ENCODE measurements at regions of chr15 and their contacts with region 1.

Region 1: GRCh38 chr15:59725172-59725486 is 36.0 kb upstream of the BNIP2 start:
- DNase-seq: no peak
- H3K4me3 ChIP-seq: no peak overlapping the region
- H3K27ac ChIP-seq: no peak overlapping the region
- H3K4me1 ChIP-seq: no peaks in the 10 kb centered on the region
- CTCF ChIP-seq: 0 out of 2 replicates have a peak, but pooled peaks have one; percentile 4

Region 2: GRCh38 chr15:59699810-59700431 is 25.2 kb before region 1 on chr15:
- CTCF ChIA-PET with region 1: no interaction called
- POLR2A ChIA-PET with region 1: no interaction called
- intact Hi-C with region 1: no loop called
- DNase-seq: no peak
- H3K4me3 ChIP-seq: no peak overlapping the region
- H3K27ac ChIP-seq: no peak overlapping the region
- H3K4me1 ChIP-seq: no peaks in the 10 kb centered on the region
- CTCF ChIP-seq: no peak

Region 3: DNA sequence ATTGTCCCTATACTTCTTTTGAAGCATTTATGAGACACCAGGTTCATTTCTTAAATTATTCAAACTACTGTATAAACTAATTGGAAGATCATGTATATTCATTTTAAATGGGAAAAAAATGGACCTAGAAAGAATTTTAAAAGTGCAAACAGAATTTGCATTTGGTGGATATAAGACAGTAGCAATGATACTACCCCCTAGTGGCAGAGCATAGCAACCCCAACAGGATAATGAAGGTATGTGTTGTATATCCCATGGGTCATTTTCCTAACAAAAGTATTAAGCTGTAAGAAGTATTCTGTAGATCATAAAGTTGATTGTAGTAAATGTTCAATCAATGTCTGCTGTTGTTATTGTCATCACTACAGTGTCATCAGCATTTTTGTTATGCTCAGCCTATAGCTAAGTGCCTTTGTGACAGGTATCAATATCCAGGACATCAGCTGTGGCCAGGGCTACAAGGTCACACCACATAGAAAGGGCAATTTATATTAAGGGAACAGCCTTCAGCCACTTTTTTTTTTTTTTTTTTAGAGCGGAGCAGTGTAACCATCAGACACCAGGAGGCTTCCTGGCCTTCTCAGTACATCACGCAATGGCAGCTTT is 454.8 kb after region 1 on chr15:
- CTCF ChIA-PET with region 1: no interaction called
- POLR2A ChIA-PET with region 1: no interaction called
- intact Hi-C with region 1: loop called (anchors 10 kb)
- DNase-seq: peak; percentile 51
- H3K4me3 ChIP-seq: no peak overlapping the region
- H3K27ac ChIP-seq: no peak overlapping the region
- H3K4me1 ChIP-seq: no peaks in the 10 kb centered on the region
- CTCF ChIP-seq: peak; percentile 97

Region 4: DNA sequence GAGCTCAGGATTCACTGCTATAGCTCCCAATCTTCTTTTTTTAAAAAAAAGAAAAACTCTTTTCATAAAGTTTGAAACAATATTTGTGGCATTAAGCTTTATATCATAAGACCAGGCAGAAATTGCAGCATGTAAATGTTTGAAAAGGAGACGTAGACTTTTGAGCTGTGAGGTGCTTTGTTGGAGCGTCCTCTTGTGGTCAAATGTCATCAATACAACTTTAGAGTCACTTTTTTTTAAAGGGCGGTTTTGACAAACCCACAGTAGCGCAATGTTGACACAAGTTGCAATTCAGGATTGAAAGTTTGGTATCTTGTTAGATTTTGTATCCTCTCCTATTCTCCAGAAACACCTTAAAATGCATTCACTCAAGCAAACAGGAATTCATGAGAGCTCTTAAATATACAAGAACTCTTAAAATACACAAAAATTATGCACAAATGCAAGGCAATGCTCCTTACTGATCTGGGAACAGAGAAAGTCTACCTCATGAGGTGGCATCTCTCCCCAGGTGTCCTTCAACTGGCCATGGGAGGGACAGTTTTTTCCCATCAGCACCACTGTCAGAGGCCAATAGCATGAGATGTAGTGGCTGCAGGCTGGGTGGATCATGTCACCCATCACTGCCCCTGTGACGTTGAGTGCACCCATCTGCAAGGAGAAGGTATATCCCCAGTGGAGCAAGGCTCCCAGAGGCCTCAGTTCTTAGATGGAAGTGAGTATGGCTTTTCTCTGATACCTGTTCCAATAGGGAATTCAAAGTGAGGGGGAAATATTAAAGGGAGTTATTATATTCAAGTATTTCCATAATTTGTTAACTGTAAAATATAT is 601.9 kb after region 1 on chr15:
- CTCF ChIA-PET with region 1: no interaction called
- POLR2A ChIA-PET with region 1: no interaction called
- intact Hi-C with region 1: loop called (anchors 10 kb)
- DNase-seq: peak; percentile 51
- H3K4me3 ChIP-seq: no peak overlapping the region
- H3K27ac ChIP-seq: no peak overlapping the region
- H3K4me1 ChIP-seq: no peaks in the 10 kb centered on the region
- CTCF ChIP-seq: peak; percentile 95